Dorsolateral prefrontal cortex (tissue), 120 donors: ENCODE measurements at regions of chr3 and their contacts with region 1.

Region 1: DNA sequence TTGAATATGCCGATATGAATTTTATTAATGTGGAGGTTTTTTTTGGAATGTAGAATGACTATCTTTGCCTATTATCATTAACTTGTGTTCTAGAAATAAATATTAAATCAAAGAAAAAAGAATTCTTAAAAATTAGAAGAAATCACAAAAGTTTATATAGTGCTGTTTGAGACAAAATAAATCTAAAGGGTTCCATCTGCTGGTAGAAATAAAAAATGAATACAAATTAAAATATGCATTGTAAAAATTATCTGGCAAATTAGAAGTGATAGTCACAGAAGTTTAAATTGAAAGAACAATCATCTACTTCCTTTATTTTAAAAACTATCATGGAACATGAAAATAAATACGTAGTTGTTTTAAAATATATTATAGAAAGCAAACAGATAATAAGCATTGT is 22.7 kb upstream of the ZBTB20 start:
- DNase-seq: no peak
- H3K4me3 ChIP-seq: no peak overlapping the region
- H3K27ac ChIP-seq: no peak overlapping the region
- H3K27me3 ChIP-seq: no peaks in the 10 kb centered on the region
- CTCF ChIP-seq: peak; percentile 29 to 83 (median 59)

Region 2: GRCh38 chr3:114839476-114839875 is 330.3 kb before region 1 on chr3:
- intact Hi-C with region 1: loop called in 1 of 2 experiments (anchors 5 kb)
- DNase-seq: no peak
- H3K4me3 ChIP-seq: no peak overlapping the region
- H3K27ac ChIP-seq: no peak overlapping the region
- H3K27me3 ChIP-seq: no peaks in the 10 kb centered on the region
- CTCF ChIP-seq: no peak

Region 3: DNA sequence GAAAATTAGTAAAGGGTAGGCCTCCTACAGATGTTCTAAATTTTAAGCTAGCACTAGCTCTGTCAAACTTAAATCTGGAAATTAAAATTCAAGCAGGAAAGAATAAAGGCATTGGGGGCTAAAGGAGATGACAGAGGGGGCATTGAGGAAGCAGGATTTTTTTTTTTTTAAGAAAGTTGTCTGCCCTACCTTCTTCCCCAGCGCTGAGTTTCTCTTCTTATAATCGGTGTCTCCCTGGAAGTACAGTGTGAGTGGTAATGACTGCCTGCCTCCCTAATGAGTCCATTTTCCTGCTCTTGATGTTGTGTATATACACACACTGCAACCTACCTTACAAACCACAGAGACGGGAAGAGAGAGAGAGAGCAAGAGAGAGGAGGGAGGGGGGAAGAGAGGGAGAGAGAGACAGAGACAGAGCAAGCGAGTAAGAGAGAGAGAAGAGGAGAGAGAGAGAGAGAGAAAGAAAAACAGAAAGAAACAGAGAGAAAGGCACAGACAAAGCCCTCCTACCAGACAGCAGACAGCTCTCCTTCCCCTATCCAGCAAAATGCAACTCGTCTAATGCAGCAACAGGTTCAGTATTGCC is 69.7 kb before region 1 on chr3:
- intact Hi-C with region 1: loop called in 1 of 2 experiments (anchors 5 kb)
- DNase-seq: peak in 2 of 10 donors; percentile 14 to 39
- H3K4me3 ChIP-seq: peak overlapping the region; percentile 8 to 67 (median 49)
- H3K27ac ChIP-seq: peak overlapping the region; percentile 4 to 89 (median 80)
- H3K27me3 ChIP-seq: no peaks in the 10 kb centered on the region
- CTCF ChIP-seq: peak in 2 of 56 donors; percentile 7 to 12

Region 4: GRCh38 chr3:115401298-115401697 is 231.5 kb after region 1 on chr3:
- intact Hi-C with region 1: no loop called
- DNase-seq: no peak
- H3K4me3 ChIP-seq: no peak overlapping the region
- H3K27ac ChIP-seq: no peak overlapping the region
- H3K27me3 ChIP-seq: no peaks in the 10 kb centered on the region
- CTCF ChIP-seq: no peak